ENCODE measurements at regions of chr2 and their contacts with region 1.

Region 1: GRCh38 chr2:61764035-61764800 is 89.6 kb downstream of the FAM161A start:
- DNase-seq: peak; percentile 99
- H3K4me3 ChIP-seq: peak overlapping the region; percentile 77 to 80
- H3K27ac ChIP-seq: peak overlapping the region; percentile 98 to 99
- H3K4me1 ChIP-seq: no peaks in the 10 kb centered on the region
- H3K27me3 ChIP-seq: no peaks in the 10 kb centered on the region
- CTCF ChIP-seq: no peak
- POLR2A ChIP-seq: peak; percentile 12

Region 2: GRCh38 chr2:61220768-61221167 is 543.5 kb before region 1 on chr2:
- intact Hi-C with region 1: no loop called
- DNase-seq: no peak
- H3K4me3 ChIP-seq: no peak overlapping the region
- H3K27ac ChIP-seq: no peak overlapping the region
- H3K4me1 ChIP-seq: no peaks in the 10 kb centered on the region
- H3K27me3 ChIP-seq: no peaks in the 10 kb centered on the region
- CTCF ChIP-seq: no peak
- POLR2A ChIP-seq: no peak

Region 3: DNA sequence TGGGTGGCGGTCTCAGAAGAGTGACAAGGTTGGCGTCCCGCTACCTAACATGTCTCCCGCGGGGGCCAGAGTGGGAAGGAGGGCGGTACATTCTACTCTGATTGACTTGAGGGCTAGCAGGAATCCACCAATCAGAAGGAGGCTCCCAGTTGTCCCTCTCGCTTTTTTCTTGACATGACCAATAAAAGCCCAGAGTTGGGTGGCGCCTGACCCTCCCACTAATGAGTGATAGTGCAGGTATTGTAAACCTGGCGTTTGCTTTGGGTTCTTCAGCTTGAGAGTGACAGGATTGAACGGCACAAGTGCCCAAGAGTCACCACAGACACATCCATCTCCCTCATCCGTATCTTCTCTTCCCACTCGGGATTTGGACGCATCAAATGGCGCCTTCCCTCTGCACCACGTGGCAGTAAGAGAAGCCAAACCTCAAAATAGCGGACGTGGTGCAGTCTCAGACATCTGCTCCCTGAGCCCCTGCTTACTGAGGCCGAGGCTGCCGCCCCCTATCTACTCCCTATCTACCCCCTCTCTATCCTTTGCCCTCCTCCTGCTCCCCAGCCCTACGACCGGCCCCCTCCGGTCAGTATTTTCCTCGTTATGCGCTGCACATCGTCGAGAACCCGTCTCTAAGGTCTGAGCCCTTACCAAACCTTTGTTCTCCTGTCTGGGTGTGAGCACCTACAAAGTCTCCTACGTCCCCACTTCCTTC is 90.4 kb after region 1 on chr2:
- intact Hi-C with region 1: loop called (anchors 10 kb)
- DNase-seq: peak; percentile 97
- H3K4me3 ChIP-seq: peak overlapping the region; percentile 70 to 90
- H3K27ac ChIP-seq: peak overlapping the region; percentile 74 to 88
- H3K4me1 ChIP-seq: peaks cover 4% of the 10 kb centered on the region
- H3K27me3 ChIP-seq: no peaks in the 10 kb centered on the region
- CTCF ChIP-seq: no peak
- POLR2A ChIP-seq: no peak

Region 4: DNA sequence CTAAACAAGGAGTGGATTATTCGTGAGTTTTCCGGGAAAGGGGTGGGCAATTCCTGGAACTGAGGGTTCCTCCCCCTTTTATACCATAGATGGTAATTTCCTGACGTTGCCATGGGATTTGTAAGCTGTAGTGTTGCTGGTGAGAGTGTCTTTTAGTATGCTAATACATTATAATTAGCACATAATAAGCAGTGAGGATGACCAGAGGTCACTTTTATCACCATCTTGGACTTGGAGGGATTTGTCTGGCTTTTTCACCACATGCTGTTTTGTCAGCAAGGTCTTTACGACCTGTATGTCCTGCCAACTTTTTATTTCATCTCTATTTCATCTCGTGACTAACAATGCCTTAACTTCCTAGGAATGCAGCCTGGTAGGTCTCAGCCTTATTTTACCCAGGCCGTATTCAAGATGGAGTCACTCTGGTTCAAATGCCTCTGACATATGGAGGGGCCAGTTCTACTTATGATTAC is 306.9 kb after region 1 on chr2:
- intact Hi-C with region 1: no loop called
- DNase-seq: no peak
- H3K4me3 ChIP-seq: no peak overlapping the region
- H3K27ac ChIP-seq: no peak overlapping the region
- H3K4me1 ChIP-seq: no peaks in the 10 kb centered on the region
- H3K27me3 ChIP-seq: no peaks in the 10 kb centered on the region
- CTCF ChIP-seq: no peak
- POLR2A ChIP-seq: no peak